Activated T-helper 1 cell treated with anti-CD3 and anti-CD28 coated beads, Interleukin-12 subunit alpha, Interleukin-12 subunit beta, Interleukin-2, Interleukin-4 antibody, amounts not matched to agents 30 ng/mL and 10 ng/mL and 1 ng/mL, durations not matched to agents 14 hours and 24 hours and 36 hours (primary cell): ENCODE measurements at regions of chr22 and their contacts with region 1.

Region 1: GRCh38 chr22:38181453-38182247 is at the start of gene PLA2G6:
- DNase-seq: peak; percentile 99
- H3K4me3 Mint-ChIP-seq: peak within 1 kb of the TSS; percentile 89
- H3K27ac Mint-ChIP-seq: peak within 1 kb of the TSS; percentile 95
- H3K4me1 Mint-ChIP-seq: peaks cover 48% of the 10 kb centered on the region
- H3K27me3 Mint-ChIP-seq: peaks cover 10% of the 10 kb centered on the region
- total RNA-seq, gene PLA2G6: 34.8 and 34.9 TPM in 2 replicates

Region 2: GRCh38 chr22:38272373-38273134 is 90.9 kb after region 1 on chr22 and contains the start of gene TMEM184B:
- intact Hi-C with region 1: loop called (anchors 2 kb)
- DNase-seq: peak; percentile 82
- H3K4me3 Mint-ChIP-seq: peak within 1 kb of the TSS; percentile 87
- H3K27ac Mint-ChIP-seq: peak within 1 kb of the TSS; percentile 87
- H3K4me1 Mint-ChIP-seq: peaks cover 45% of the 10 kb centered on the region
- H3K27me3 Mint-ChIP-seq: peaks cover 11% of the 10 kb centered on the region
- total RNA-seq, gene TMEM184B: 36.6 and 39.1 TPM in 2 replicates

Region 3: GRCh38 chr22:38284042-38284402 is 102.4 kb after region 1 on chr22:
- intact Hi-C with region 1: no loop called
- DNase-seq: no peak
- H3K4me3 Mint-ChIP-seq: no peak overlapping the region
- H3K27ac Mint-ChIP-seq: no peak overlapping the region
- H3K4me1 Mint-ChIP-seq: no peaks in the 10 kb centered on the region
- H3K27me3 Mint-ChIP-seq: no peaks in the 10 kb centered on the region

Region 4: GRCh38 chr22:38317122-38317994 is 135.7 kb after region 1 on chr22 and contains the start of gene CSNK1E:
- intact Hi-C with region 1: loop called (anchors 2 kb)
- DNase-seq: peak; percentile 74
- H3K4me3 Mint-ChIP-seq: peak within 1 kb of the TSS; percentile 90
- H3K27ac Mint-ChIP-seq: peak within 1 kb of the TSS; percentile 87
- H3K4me1 Mint-ChIP-seq: peaks cover 44% of the 10 kb centered on the region
- H3K27me3 Mint-ChIP-seq: no peaks in the 10 kb centered on the region
- total RNA-seq, gene CSNK1E: 151 and 154 TPM in 2 replicates

Region 5: GRCh38 chr22:38398609-38399461 is 217.2 kb after region 1 on chr22:
- intact Hi-C with region 1: loop called (anchors 5 kb)
- DNase-seq: peak; percentile 76
- H3K4me3 Mint-ChIP-seq: peak overlapping the region; percentile 84
- H3K27ac Mint-ChIP-seq: peak overlapping the region; percentile 23
- H3K4me1 Mint-ChIP-seq: peaks cover 35% of the 10 kb centered on the region
- H3K27me3 Mint-ChIP-seq: peaks cover 9% of the 10 kb centered on the region

Region 6: GRCh38 chr22:38656256-38657044 is 474.8 kb after region 1 on chr22 and contains the starts of genes CBY1 and FAM227A:
- intact Hi-C with region 1: loop called (anchors 10 kb)
- DNase-seq: peak; percentile 83
- H3K4me3 Mint-ChIP-seq: peak within 1 kb of the TSS; percentile 93
- H3K27ac Mint-ChIP-seq: peak within 1 kb of the TSS; percentile 98
- H3K4me1 Mint-ChIP-seq: peaks cover 16% of the 10 kb centered on the region
- H3K27me3 Mint-ChIP-seq: no peaks in the 10 kb centered on the region
- total RNA-seq, gene CBY1: 8.6 and 8.8 TPM in 2 replicates
- total RNA-seq, gene FAM227A: 0.16 and 0.78 TPM in 2 replicates